ENCODE measurements at regions of chr5 and their contacts with region 1.

Region 1: DNA sequence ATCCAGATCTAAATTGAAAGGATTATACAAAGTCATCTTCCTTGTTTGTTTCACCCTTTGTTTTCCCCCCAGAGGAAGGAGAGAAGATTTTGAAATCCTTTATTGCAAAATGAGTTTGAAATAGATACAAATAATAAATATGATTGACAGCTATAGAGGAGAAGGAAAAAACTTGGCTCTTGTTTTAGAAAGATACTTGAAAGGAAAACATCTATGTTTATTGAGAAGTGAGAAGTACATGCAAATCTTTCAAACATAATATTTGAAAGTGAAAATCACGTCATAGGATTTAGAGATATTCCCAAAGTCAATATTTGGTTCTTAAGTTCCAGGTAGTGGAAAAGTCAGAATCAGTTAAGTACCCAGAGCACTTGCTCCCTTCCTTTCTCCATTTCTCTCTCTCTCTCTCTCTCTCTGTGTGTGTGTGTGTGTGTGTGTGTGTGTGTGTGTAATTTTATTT is 27.2 kb downstream of the PAM start:
- DNase-seq: no peak
- H3K4me3 ChIP-seq: no peak overlapping the region
- CTCF ChIP-seq: no peak

Region 2: GRCh38 chr5:102801371-102801770 is 19.0 kb after region 1 on chr5:
- CTCF ChIA-PET with region 1: interaction called, 30 read pairs
- POLR2A ChIA-PET with region 1: no interaction called
- DNase-seq: no peak
- H3K4me3 ChIP-seq: no peak overlapping the region
- CTCF ChIP-seq: no peak

Region 3: DNA sequence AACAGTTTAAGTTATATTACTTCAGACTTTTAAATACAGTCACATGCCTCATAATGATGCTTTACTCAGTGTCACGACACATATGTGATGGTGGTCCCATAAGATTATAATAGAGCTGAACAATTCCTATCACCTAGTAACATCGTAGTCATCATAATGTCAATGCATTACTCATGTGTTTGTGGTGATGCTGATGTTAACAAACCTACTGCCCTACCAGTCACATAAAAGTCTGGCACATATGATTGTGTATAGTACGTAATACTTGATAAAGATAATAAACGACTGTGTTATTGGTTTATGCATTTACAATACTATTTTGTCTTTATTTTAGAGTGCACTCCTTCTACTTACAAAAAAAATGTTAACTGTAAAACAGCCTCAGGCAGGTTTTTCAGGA is 76.5 kb after region 1 on chr5:
- CTCF ChIA-PET with region 1: interaction called, 10 read pairs
- POLR2A ChIA-PET with region 1: no interaction called
- DNase-seq: no peak
- H3K4me3 ChIP-seq: no peak overlapping the region
- CTCF ChIP-seq: no peak

Region 4: DNA sequence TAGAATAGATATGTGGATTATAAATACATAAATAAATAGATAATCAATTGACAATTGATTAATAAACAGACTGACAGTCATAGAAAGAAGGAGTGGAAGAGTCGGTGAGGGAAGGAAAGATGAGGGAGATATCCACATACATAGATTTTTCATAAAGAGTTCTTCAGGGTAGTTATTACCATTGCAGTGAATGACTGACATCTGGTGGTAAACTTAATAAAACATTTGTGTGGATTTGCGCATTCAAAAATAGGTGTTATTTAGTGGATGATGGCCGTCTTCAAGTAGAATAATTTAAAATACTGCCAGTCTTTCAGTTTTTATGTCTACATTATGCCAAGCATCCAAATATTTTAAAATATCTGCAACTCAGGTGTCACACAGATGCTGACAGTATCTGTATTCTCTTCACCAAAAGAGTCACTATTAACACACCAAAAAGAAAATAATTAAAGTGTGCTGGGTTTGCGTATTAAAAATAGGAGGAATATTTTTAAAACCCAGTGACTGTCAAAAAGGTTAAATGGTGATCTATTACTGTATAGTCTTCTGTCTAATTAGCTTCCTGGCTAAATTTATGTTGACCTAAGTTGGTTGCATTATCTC is 258.8 kb after region 1 on chr5:
- CTCF ChIA-PET with region 1: interaction called, 11 read pairs
- POLR2A ChIA-PET with region 1: no interaction called
- DNase-seq: no peak
- H3K4me3 ChIP-seq: no peak overlapping the region
- CTCF ChIP-seq: peak; percentile 32

Measured in AG04449 (cell line).